ENCODE measurements at regions of chr14 and their contacts with region 1.

Region 1: DNA sequence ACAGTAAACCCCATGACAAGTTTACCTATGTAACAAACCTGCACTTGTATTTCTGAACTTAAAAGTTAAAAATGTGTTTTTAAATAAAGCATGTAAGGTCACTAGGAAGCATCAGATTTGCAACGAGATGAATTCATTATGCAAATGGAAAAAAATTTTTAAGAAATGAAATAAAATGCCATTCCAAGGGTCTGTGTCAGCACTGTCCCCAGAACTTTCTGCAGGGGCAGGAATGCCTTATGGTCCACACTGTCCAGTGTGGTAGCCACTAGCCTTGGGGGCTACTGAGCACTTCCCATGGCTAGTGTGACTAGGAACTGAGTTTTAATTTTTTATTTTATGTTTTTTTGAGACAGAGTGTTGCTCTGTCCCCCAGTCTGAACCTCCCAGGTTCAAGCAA is 49.2 kb downstream of the HSP90AA1 start:
- DNase-seq: no peak
- ATAC-seq: no peak
- H3K4me3 ChIP-seq: no peak overlapping the region
- H3K27ac ChIP-seq: no peak overlapping the region
- H3K4me1 ChIP-seq: no peaks in the 10 kb centered on the region
- H3K27me3 ChIP-seq: no peaks in the 10 kb centered on the region
- CTCF ChIP-seq: no peak

Region 2: DNA sequence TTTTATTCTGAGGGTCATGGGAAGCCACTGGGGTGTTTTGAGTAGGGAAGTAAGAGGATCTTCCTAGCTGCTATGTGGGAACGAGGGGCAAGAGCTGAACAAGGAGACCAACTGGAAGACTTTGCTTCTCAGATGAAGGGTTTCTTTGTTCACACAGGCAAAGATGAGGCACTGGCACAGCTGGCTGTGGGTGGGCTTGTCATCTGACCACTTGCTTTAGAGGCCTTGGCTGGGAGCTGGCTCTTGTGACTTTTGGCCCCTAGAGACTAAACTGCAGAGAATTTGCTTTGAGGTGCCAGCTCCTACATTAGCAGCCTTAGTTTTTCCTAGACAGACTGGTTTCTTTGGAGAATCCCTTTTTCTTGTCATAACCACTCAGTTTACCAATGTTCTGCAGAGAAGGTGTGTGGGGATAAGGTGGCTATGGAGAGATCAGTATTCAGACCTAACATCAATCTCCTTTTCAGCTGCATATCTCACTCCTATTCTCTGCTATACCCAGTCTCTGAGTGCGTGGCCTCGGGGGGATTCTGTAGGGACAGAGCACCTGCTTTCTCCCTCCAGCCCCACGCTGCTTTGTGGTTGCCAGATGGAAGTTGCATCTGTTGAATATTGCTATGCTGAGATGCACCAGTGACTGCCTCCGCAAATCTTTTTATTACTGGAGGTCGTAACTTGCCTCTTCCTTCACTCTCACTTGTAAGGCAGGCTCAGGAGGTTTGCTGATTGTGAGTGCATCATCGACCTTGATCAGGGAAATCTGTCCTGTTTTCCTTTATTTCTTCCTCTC is 263.5 kb before region 1 on chr14:
- intact Hi-C with region 1: no loop called
- DNase-seq: no peak
- ATAC-seq: no peak
- H3K4me3 ChIP-seq: no peak overlapping the region
- H3K27ac ChIP-seq: no peak overlapping the region
- H3K4me1 ChIP-seq: no peaks in the 10 kb centered on the region
- H3K27me3 ChIP-seq: peaks cover 0 to 6% of the 10 kb centered on the region in 2 donors
- CTCF ChIP-seq: no peak

Region 3: DNA sequence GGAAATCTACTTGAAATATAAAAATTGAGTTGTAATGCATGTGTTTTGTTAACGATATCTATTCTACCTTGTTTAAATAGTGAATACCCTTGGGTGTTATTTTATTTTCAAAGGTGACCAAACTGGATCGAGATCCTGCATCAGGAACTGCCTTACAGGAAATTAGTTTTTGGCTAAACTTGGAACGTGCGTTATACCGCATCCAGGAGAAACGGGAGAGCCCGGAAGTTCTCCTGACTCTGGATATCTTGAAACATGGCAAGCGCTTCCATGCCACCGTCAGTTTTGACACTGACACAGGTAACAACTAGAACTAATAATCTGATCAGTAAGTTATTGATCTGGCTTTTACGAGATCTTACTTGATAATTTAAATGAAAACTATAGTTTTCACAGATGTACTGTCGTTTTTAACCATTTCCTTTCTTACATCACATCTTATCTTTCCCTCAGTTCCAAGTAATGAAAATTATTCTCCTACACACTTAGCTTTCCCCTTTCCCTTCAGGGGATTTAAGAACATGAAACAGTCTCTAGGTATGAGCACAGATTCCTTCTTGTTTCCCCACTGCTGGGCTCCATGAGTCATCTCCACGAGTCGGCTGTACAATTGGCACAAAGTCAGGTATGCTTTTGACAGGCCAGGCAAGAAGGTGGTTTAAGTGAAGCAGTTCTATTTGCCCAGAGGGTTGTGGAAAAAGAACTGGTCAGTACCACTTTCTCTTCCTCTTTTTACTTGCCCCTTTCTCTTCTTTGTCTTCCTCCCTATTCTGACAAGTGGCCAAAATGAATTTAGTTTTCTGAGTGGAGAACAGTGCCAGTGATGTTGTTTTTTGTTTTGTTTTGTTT is 57.2 kb before region 1 on chr14:
- intact Hi-C with region 1: loop called in 1 of 2 experiments (anchors 2 kb)
- DNase-seq: peak in 1 of 4 donors; percentile 59
- ATAC-seq: peak; percentile 93
- H3K4me3 ChIP-seq: no peak overlapping the region
- H3K27ac ChIP-seq: peak overlapping the region in 1 of 2 donors; percentile 6
- H3K4me1 ChIP-seq: peaks cover 8 to 19% of the 10 kb centered on the region in 2 donors
- H3K27me3 ChIP-seq: no peaks in the 10 kb centered on the region
- CTCF ChIP-seq: no peak